Activated CD8-positive, alpha-beta T cell treated with anti-CD3 and anti-CD28 coated beads, Interleukin-2, amount 10 ng/mL, durations not matched to agents 7 days and 5 days (primary cell): ENCODE measurements at regions of chr1 and their contacts with region 1.

Region 1: GRCh38 chr1:175154629-175155472 is 37.7 kb downstream of the KIAA0040 start:
- DNase-seq: peak; percentile 79
- ATAC-seq: peak; percentile 71
- H3K4me3 Mint-ChIP-seq: no peak overlapping the region
- H3K27ac Mint-ChIP-seq: no peak overlapping the region
- H3K4me1 Mint-ChIP-seq: peaks cover 10% of the 10 kb centered on the region
- H3K27me3 Mint-ChIP-seq: peaks cover 23% of the 10 kb centered on the region

Region 2: DNA sequence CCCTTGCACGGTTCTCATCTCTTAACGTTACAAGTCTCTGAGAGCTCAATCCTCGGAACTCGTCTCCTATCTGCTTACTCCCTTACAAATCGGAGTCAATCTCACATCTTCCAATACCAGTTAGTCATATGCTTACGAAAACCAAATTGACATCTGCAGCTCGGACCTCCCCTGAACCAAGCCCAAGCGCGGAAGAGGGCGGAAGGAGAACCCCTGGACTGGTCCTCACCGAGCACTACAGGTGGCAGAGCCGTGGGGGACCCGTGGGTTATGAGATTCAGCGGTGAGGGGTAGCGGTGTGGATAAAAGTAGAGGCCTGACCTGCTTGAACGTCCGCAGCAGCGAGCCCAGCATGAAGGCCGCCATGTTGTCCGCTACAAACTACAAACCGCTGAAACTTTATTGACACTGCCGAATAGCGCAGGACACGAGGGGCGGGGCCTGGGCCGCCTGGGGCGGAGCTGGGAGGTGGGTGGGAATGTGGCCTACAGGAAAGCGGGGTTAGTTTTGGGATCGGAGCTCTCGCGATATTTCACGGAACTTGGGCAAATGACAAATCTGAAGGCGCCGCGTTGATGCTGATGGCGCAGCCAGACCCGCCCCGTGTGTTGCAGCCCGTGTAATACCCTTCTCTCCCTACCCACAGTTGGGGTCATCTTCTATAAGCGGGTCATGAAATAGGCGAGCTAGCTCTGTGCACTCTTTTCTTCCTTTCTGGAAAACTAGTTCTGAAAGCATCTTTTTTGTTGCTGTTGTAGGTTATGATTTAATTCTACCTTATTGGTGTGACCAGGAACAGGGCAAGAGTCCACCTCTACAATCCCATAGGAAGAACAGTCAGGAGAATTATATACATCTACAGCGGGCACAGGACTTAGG is 131.6 kb before region 1 on chr1 and contains the start of gene MRPS14:
- CTCF ChIA-PET with region 1: interaction called, 29 read pairs
- POLR2A ChIA-PET with region 1: no interaction called
- DNase-seq: peak; percentile 99
- ATAC-seq: peak; percentile 93
- H3K4me3 Mint-ChIP-seq: peak within 1 kb of the TSS; percentile 93
- H3K27ac Mint-ChIP-seq: peak within 1 kb of the TSS; percentile 92
- H3K4me1 Mint-ChIP-seq: peaks cover 36% of the 10 kb centered on the region
- H3K27me3 Mint-ChIP-seq: no peaks in the 10 kb centered on the region
- total RNA-seq, gene MRPS14: 30.2 to 33.7 TPM

Region 3: GRCh38 chr1:175174309-175175165 is 19.7 kb after region 1 on chr1:
- CTCF ChIA-PET with region 1: interaction called, 13 read pairs
- POLR2A ChIA-PET with region 1: no interaction called
- DNase-seq: no peak
- ATAC-seq: no peak
- H3K4me3 Mint-ChIP-seq: no peak overlapping the region
- H3K27ac Mint-ChIP-seq: peak overlapping the region; percentile 43
- H3K4me1 Mint-ChIP-seq: peaks cover 42% of the 10 kb centered on the region
- H3K27me3 Mint-ChIP-seq: no peaks in the 10 kb centered on the region

Region 4: DNA sequence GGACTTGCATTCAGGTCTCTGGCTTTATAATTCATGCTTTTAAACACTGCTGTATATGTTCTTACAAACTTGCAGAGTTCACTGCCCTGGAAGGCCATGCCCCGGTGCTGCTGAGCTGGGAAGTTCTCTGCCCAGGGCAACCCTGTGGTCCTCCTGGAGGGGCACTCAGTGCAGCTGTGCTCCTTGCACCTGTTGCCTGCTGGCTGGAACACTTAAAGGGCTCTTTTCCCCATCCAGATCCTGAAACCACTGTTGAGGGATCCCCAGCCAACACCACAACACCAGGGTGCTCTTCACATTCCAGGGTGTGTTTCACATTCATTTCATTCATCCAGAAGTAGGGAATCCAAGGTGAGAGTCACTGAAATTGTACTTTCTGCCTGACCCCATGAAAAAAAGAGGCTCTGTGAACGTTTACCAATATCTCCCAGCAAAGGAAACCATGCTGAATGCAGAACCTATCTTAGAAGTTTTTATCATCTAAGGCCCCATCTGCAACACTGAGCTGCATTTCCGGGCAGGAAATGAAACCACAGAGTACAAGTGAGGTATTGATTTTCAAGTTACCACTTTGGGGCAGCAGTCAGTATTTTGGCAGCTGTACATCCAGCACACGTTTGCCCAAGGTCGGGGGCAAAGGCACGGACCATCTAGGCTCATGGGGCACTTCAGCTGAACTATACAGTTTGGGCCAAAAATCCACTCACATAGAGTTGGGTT is 54.1 kb after region 1 on chr1:
- CTCF ChIA-PET with region 1: interaction called, 24 read pairs
- POLR2A ChIA-PET with region 1: no interaction called
- DNase-seq: peak; percentile 83
- ATAC-seq: peak; percentile 91
- H3K4me3 Mint-ChIP-seq: peak overlapping the region; percentile 75
- H3K27ac Mint-ChIP-seq: peak overlapping the region; percentile 99
- H3K4me1 Mint-ChIP-seq: peaks cover 49% of the 10 kb centered on the region
- H3K27me3 Mint-ChIP-seq: no peaks in the 10 kb centered on the region

Region 5: GRCh38 chr1:175294179-175294756 is 139.4 kb after region 1 on chr1:
- CTCF ChIA-PET with region 1: interaction called, 14 read pairs
- POLR2A ChIA-PET with region 1: no interaction called
- DNase-seq: no peak
- ATAC-seq: no peak
- H3K4me3 Mint-ChIP-seq: no peak overlapping the region
- H3K27ac Mint-ChIP-seq: no peak overlapping the region
- H3K4me1 Mint-ChIP-seq: peaks cover 15% of the 10 kb centered on the region
- H3K27me3 Mint-ChIP-seq: peaks cover 16% of the 10 kb centered on the region

Region 6: DNA sequence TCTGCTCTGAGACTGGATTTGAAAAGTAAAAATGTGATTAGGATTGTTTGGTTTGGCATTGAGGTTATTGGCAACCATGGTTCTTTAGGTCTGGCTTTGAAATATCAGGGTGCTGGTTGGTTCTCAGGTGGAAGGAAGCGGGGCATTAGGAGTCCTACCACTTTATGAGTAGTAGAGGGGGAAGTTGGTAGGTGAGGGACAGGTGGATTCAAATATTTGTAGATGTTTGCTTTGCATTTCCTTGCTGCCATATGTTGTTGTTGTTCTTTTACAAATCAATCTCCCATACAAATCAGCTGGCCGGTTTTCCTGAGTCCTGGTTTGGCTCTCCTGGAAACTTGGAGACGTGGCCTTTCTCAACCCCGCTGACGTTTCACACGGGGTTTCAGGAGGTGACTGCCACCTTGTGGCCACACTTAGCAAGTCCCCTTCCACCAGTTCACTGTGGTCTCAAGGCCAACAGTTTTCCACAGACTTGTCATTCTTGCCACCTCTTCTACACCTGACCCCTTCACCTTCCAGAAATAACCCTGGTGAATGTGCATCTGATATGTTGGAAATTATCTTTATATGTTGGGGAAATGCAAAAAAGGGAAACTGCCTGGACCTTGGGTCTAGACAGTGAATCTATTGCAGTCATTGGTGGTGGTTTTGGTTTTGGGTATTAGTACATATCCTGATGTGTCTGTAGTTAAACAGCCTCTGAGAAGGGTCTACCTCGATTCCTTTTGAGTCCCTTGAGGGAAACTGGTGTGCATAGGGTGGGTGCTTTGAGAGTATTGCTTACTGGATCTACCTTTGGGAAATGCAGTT is 164.8 kb after region 1 on chr1:
- CTCF ChIA-PET with region 1: interaction called, 411 read pairs
- POLR2A ChIA-PET with region 1: interaction called, 3 read pairs
- DNase-seq: peak; percentile 76
- ATAC-seq: peak; percentile 88
- H3K4me3 Mint-ChIP-seq: no peak overlapping the region
- H3K27ac Mint-ChIP-seq: no peak overlapping the region
- H3K4me1 Mint-ChIP-seq: peaks cover 4% of the 10 kb centered on the region
- H3K27me3 Mint-ChIP-seq: peaks cover 4% of the 10 kb centered on the region

Region 7: DNA sequence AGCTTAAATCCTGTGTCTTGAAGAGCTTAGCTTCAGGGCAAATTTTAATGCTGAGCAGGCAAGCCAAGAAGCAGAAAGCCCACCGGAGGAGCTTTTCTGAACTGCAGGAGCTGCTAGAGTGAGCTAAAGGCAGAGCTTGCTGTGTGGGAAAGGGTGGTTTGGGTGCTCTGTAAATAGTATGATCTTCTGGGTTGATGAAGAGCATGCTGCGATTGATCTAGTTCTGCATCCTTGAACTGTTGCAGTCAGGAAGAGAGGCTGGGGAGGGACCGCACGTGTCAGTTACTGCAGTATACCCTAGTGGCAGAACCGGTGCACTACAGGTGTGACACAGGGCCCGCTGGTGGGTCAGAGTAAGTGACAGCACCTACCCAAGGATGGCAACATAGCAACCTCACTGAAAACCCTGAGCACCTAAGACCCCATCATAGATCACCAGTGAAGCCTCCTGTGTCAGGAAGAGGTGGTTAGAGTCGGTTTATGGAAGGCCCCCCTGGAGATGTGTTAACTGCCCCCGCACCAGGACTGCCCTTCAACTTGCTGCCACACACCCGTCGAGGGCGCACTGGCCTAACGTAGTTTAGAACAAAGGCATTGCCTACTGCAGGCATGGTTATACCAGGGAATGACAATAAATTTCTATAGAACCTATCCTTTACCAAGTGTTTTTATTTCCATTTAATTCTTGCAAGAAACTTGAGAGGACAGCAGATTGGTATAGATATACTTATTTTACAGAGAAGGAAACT is 183.7 kb after region 1 on chr1:
- CTCF ChIA-PET with region 1: interaction called, 19 read pairs
- POLR2A ChIA-PET with region 1: no interaction called
- DNase-seq: peak; percentile 67
- ATAC-seq: peak; percentile 89
- H3K4me3 Mint-ChIP-seq: no peak overlapping the region
- H3K27ac Mint-ChIP-seq: no peak overlapping the region
- H3K4me1 Mint-ChIP-seq: no peaks in the 10 kb centered on the region
- H3K27me3 Mint-ChIP-seq: peaks cover 28% of the 10 kb centered on the region